HCT116 (cell line): ENCODE measurements at regions of chr4 and their contacts with region 1.

Region 1: DNA sequence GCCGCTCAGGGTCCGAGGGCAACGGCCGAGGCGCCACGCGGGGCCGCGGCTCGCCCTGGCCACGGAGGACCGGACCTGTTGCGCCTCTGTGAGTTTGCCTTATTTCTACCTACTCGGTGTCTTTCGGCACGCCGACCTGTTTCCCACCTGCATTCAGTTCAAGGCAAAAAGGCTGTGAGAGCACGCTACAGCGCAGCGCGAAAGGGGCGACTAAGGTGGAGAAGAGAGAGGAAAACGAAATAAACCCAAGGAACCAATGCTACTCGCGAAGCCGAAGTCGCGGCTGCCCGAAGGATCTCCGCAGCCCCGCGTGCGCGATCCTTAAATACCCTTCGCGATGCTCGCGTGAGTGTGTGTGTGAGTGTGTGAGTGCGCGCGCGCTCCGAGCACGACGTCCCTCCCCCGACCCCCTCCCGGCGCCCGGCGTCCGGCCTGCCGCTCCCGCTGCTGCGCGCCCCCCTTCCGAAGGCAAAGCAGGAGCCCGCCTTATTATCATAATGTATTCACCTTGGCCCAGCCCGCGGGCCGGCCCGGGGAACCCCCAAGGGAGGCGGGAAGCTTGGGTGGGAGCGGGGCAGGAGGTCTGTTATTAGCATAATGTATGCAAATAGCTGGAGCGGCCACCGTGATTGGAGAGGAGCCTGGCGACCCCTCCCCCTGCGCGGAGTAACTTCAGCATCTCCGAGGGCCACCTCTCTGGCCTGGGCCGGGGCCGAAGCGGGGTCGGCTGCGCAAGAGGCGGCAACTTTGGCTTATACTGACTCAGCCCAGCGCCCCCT is at the start of gene COL25A1:
- DNase-seq: no peak
- ATAC-seq: no peak
- H3K4me3 ChIP-seq: no peak within 1 kb of the TSS
- H3K27ac ChIP-seq: no peak within 1 kb of the TSS
- H3K4me1 ChIP-seq: no peaks in the 10 kb centered on the region
- H3K27me3 ChIP-seq: peaks cover 14% of the 10 kb centered on the region
- CTCF ChIP-seq: no peak
- POLR2A ChIP-seq: no peak
- RAD21 ChIP-seq: no peak
- total RNA-seq, gene COL25A1: not detected

Region 2: DNA sequence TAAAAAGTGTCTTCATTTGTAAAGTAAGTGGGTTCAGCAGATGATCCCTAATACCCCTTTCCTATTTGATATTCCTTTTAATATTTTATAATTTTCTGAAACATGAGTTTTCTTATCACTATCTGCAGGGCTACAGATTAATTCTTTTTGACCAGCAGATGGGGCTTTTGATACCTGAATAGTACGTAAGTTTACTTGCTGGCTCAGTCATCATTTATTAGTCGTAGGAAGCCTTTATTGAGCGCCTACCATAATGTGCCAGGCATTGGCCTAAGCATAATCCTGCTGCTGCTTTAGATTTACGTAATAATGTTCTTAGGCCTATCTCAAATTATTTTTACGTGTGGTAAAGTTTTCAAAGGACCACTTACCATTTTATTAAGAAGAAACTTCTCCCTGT is 619.1 kb before region 1 on chr4:
- CTCF ChIA-PET with region 1: interaction called, 4 read pairs
- POLR2A ChIA-PET with region 1: no interaction called
- RAD21 ChIA-PET with region 1: no interaction called
- intact Hi-C with region 1: loop called (anchors 5 kb)
- DNase-seq: peak; percentile 15
- ATAC-seq: peak; percentile 71; the same call in 1 of the 2 replicates
- H3K4me3 ChIP-seq: no peak overlapping the region
- H3K27ac ChIP-seq: no peak overlapping the region
- H3K4me1 ChIP-seq: no peaks in the 10 kb centered on the region; a peak in 1 of 4 replicates
- H3K27me3 ChIP-seq: no peaks in the 10 kb centered on the region
- CTCF ChIP-seq: peak; percentile 38 to 57 (median 48); a peak in 5 of 6 replicates
- POLR2A ChIP-seq: no peak
- RAD21 ChIP-seq: peak; percentile 53

Region 3: DNA sequence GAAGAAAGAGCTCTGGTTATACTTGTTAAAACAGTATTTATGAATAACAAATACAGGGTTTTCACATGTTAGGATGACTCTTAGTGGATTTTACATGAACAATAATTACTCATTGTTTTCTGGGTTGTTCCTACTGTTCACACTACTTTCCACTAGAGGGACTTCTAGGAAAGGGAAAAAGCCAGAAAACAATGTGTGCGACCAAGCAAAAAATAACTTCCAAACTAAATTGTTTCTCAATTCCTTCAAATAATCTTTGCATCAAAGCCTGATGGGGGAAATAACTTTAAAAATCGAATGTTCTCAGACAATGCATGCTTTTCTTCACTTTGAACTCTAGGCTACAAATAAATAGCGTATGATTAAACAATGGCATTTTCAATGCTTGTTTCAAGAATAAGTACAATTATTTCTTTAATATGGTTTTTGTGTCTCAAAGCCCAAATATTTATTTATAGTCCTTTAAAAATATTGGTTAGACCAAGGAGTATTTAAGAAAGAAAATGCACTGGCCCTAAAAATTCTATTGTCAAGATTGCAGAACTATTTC is 467.6 kb before region 1 on chr4:
- CTCF ChIA-PET with region 1: interaction called, 8 read pairs
- POLR2A ChIA-PET with region 1: no interaction called
- RAD21 ChIA-PET with region 1: no interaction called
- intact Hi-C with region 1: loop called (anchors 1 kb)
- DNase-seq: peak; percentile 4
- ATAC-seq: peak; percentile 79
- H3K4me3 ChIP-seq: no peak overlapping the region
- H3K27ac ChIP-seq: no peak overlapping the region
- H3K4me1 ChIP-seq: no peaks in the 10 kb centered on the region
- H3K27me3 ChIP-seq: peaks cover 34% of the 10 kb centered on the region
- CTCF ChIP-seq: peak; percentile 59 to 74 (median 62); a peak in 5 of 6 replicates
- POLR2A ChIP-seq: no peak
- RAD21 ChIP-seq: peak; percentile 81

Region 4: GRCh38 chr4:108885211-108885610 is 417.3 kb before region 1 on chr4:
- CTCF ChIA-PET with region 1: no interaction called
- POLR2A ChIA-PET with region 1: no interaction called
- RAD21 ChIA-PET with region 1: no interaction called
- intact Hi-C with region 1: no loop called
- DNase-seq: no peak
- ATAC-seq: no peak
- H3K4me3 ChIP-seq: no peak overlapping the region
- H3K27ac ChIP-seq: no peak overlapping the region
- H3K4me1 ChIP-seq: no peaks in the 10 kb centered on the region
- H3K27me3 ChIP-seq: peaks cover 56% of the 10 kb centered on the region
- CTCF ChIP-seq: no peak
- POLR2A ChIP-seq: no peak
- RAD21 ChIP-seq: no peak

Region 5: GRCh38 chr4:108926061-108926460 is 376.5 kb before region 1 on chr4:
- CTCF ChIA-PET with region 1: no interaction called
- POLR2A ChIA-PET with region 1: no interaction called
- RAD21 ChIA-PET with region 1: no interaction called
- intact Hi-C with region 1: no loop called
- DNase-seq: no peak
- ATAC-seq: no peak
- H3K4me3 ChIP-seq: no peak overlapping the region
- H3K27ac ChIP-seq: no peak overlapping the region
- H3K4me1 ChIP-seq: no peaks in the 10 kb centered on the region
- H3K27me3 ChIP-seq: peaks cover 52% of the 10 kb centered on the region
- CTCF ChIP-seq: no peak
- POLR2A ChIP-seq: no peak
- RAD21 ChIP-seq: no peak